ENCODE measurements at regions of chr3 and their contacts with region 1.

Region 1: GRCh38 chr3:42755681-42756578 is 17.1 kb downstream of the CCDC13 start:
- DNase-seq: peak; percentile 91
- ATAC-seq: peak; percentile 88
- H3K4me3 ChIP-seq: peak overlapping the region in 1 of 3 experiments; percentile 18; a peak in 1 of 6 replicates
- H3K27ac ChIP-seq: peak overlapping the region; percentile 87
- H3K4me1 ChIP-seq: peaks cover 29% of the 10 kb centered on the region
- H3K27me3 ChIP-seq: no peaks in the 10 kb centered on the region
- CTCF ChIP-seq: peak; percentile 77
- EP300 ChIP-seq: peak; percentile 80 to 92; a peak in 3 of 4 replicates
- POLR2A ChIP-seq: no peak
- RAD21 ChIP-seq: no peak; the same call in 1 of the 2 replicates

Region 2: DNA sequence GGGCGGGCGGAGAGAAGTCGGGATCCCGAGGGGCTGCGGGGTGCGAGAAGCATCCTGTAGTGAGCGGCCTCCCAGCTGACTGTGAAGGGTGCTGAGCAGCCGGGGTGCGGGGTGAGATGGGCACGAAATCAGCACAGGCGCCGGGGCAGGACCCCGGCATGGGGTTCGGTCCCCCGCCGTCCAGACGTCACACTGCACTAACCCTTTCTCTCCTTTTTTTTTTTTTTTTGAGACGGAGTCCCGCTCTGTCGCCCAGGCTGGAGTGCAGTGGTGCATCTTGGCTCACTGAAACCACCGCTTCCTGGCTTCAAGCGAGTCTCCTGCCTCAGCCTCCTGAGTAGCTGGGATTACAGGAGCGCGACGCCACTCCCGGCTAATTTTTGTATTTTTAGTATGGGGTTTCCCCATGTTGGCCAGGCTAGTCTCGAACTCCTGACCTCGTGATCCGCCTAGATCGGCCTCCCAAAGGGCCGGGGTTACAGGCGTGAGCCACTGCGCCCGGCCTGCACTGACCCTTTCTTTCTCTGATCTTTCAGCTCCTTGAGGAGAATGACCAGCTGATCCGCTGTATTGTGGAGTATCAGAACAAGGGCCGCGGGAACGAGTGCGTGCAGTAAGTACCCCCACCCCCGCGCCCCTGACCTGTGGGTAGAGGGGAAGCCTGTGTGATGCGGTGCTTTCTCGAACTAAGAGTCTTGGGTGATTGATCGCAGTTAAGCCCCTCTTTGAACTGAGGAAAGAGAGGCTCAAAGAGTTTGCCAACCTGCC is 164.8 kb before region 1 on chr3:
- CTCF ChIA-PET with region 1: no interaction called
- POLR2A ChIA-PET with region 1: interaction called, 11 read pairs
- in situ Hi-C with region 1: no loop called
- intact Hi-C with region 1: no loop called
- DNase-seq: no peak
- ATAC-seq: no peak; the same call in 2 of the 3 replicates
- H3K4me3 ChIP-seq: peak overlapping the region; percentile 80 to 85 (median 83)
- H3K27ac ChIP-seq: peak overlapping the region; percentile 63
- H3K4me1 ChIP-seq: peaks cover 35% of the 10 kb centered on the region
- H3K27me3 ChIP-seq: no peaks in the 10 kb centered on the region; a peak in 1 of 5 replicates
- CTCF ChIP-seq: no peak
- EP300 ChIP-seq: no peak
- POLR2A ChIP-seq: no peak
- RAD21 ChIP-seq: no peak

Region 3: DNA sequence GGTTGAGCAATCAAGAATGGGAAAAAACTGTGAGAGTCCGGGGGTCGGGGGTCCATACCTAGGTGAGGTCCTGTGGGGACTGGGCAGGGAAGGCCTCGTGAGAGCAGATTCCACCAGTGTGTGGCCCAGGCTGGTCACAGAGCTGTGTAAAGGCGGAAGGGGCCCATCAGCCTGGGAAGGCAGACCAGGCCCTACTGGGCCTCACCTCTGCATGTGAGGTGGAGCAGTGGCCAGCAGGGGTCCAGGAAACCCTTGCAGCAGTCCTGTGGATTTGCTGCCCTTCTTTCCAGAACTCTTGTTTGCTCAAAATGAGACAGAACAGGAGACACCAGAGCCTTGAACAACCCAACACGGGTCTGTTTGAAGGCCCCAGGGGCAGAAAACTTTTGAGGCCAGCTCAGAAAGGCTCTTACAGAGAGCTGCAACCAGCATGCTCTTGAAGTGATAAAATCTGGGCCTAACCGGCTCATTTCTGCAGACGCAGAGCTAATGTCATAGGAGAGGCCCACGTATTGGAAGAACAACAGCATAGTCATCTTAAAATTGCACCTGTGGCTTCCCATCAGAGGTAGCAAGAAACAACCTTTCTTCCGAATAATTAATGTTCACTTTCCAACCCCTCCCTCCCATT is 23.0 kb before region 1 on chr3:
- CTCF ChIA-PET with region 1: no interaction called
- POLR2A ChIA-PET with region 1: interaction called, 18 read pairs
- in situ Hi-C with region 1: no loop called
- intact Hi-C with region 1: no loop called
- DNase-seq: peak; percentile 81
- ATAC-seq: peak; percentile 91
- H3K4me3 ChIP-seq: peak overlapping the region in 1 of 3 experiments; percentile 22; a peak in 2 of 6 replicates
- H3K27ac ChIP-seq: peak overlapping the region; percentile 97
- H3K4me1 ChIP-seq: peaks cover 64% of the 10 kb centered on the region
- H3K27me3 ChIP-seq: no peaks in the 10 kb centered on the region
- CTCF ChIP-seq: peak; percentile 77
- EP300 ChIP-seq: peak in 1 of 2 experiments; percentile 20; a peak in 1 of 4 replicates
- POLR2A ChIP-seq: no peak; a peak in 2 of 4 replicates
- RAD21 ChIP-seq: peak; percentile 71

Region 4: DNA sequence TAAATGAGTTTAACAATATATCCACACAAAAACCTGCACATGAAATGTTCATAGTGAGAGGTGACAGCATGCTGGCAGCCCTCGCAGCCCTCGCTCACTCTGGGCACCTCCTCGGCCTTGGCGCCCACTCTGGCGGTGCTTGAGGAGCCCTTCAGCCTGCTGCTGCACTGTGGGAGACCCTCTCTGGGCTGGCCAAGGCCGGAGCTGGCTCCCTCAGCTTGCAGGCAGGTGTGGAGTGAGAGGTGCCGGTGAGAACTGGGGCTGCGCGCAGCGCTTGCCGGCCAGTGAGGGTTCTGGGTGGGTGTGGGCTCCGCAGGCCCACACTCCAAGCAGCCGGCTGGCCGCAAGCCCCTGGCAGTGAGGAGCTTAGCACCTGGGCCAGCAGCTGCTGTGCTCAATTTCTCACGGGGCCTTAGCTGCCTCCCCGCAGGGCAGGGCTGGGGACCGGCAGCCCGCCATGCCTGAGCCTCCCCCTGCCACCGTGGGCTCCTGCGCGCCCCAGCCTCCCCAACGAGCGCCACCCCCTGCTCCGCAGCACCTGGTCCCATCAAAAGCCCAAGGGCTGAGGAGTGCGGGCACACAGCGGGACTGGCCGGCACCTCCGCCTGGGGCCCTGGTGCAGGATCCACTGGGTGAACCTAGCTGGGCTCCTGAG is 13.7 kb after region 1 on chr3:
- CTCF ChIA-PET with region 1: no interaction called
- POLR2A ChIA-PET with region 1: interaction called, 14 read pairs
- in situ Hi-C with region 1: no loop called
- intact Hi-C with region 1: no loop called
- DNase-seq: no peak
- ATAC-seq: no peak
- H3K4me3 ChIP-seq: no peak overlapping the region
- H3K27ac ChIP-seq: no peak overlapping the region
- H3K4me1 ChIP-seq: peaks cover 21% of the 10 kb centered on the region; the same call in 1 of the 2 replicates
- H3K27me3 ChIP-seq: no peaks in the 10 kb centered on the region
- CTCF ChIP-seq: no peak
- EP300 ChIP-seq: no peak
- POLR2A ChIP-seq: no peak
- RAD21 ChIP-seq: no peak